Psoas muscle (tissue), 8 donors: ENCODE measurements at regions of chr9 and their contacts with region 1.

Region 1: DNA sequence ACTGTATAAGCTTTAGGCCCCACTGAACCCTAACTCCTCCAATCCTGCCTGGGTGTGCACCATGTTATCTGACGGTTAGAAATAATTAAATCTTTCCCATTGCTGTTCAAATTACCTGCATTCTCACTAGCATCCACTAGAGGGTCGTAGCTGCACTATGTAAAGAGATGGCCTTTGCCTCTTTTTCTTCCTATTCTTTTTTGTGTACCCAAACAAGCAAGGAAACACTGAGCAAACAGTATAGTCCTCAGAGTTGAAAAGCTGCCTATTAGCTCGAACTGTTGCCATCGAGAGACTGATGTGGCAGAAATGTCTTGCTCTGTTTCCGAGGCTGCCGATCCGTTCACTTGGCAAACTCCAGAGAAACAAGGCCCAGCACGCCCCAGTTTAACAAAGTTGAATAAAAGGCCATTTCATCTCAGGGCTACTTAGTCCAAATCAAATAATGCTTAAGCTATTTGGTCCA is 163.8 kb upstream of the TRPM3 start:
- DNase-seq: no peak
- ATAC-seq: peak; percentile 42 to 83 (median 58)
- H3K4me3 ChIP-seq: no peak overlapping the region
- H3K27ac ChIP-seq: no peak overlapping the region
- H3K4me1 ChIP-seq: no peaks in the 10 kb centered on the region
- H3K27me3 ChIP-seq: no peaks in the 10 kb centered on the region
- CTCF ChIP-seq: peak; percentile 86

Region 2: DNA sequence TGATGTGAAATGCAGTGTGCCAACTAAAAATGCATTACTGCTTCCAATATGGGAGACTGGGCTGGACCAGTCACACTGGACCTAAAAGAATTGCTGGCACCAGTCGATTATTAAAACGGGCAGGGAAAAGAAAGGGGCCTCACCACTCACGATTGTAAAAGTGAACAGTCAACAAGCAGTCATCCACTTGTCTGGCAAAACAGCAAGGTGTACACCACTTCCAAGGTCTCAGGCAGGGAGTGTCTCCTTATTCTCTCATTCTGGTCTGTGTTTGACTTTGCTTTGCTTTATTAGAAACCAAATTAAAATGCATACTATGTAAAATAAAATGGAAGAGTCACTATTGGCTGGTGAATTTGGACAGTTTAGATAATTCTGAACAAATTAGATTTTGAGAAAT is 106.0 kb before region 1 on chr9:
- intact Hi-C with region 1: no loop called
- DNase-seq: no peak
- ATAC-seq: no peak
- H3K4me3 ChIP-seq: no peak overlapping the region
- H3K27ac ChIP-seq: no peak overlapping the region
- H3K4me1 ChIP-seq: no peaks in the 10 kb centered on the region
- H3K27me3 ChIP-seq: no peaks in the 10 kb centered on the region
- CTCF ChIP-seq: no peak

Region 3: GRCh38 chr9:71768388-71769174 is 483.4 kb after region 1 on chr9 and contains the start of gene CEMIP2:
- intact Hi-C with region 1: loop called in 1 of 2 experiments (anchors 5 kb)
- DNase-seq: peak; percentile 89 to 95
- ATAC-seq: peak; percentile 87 to 89 (median 88)
- H3K4me3 ChIP-seq: peak within 1 kb of the TSS; percentile 83
- H3K27ac ChIP-seq: peak within 1 kb of the TSS; percentile 94
- H3K4me1 ChIP-seq: peaks cover 22% of the 10 kb centered on the region
- H3K27me3 ChIP-seq: no peaks in the 10 kb centered on the region
- CTCF ChIP-seq: no peak
- total RNA-seq, gene CEMIP2: 9.6 to 20.3 (median 16.2) TPM

Region 4: GRCh38 chr9:71806901-71807307 is 521.7 kb after region 1 on chr9:
- intact Hi-C with region 1: loop called (anchors 10 kb)
- DNase-seq: peak; percentile 44 to 68
- ATAC-seq: peak; percentile 92 to 99 (median 98)
- H3K4me3 ChIP-seq: no peak overlapping the region
- H3K27ac ChIP-seq: peak overlapping the region; percentile 11
- H3K4me1 ChIP-seq: peaks cover 7% of the 10 kb centered on the region
- H3K27me3 ChIP-seq: no peaks in the 10 kb centered on the region
- CTCF ChIP-seq: peak; percentile 94

Region 5: GRCh38 chr9:71819115-71819739 is 534.0 kb after region 1 on chr9:
- intact Hi-C with region 1: loop called in 1 of 2 experiments (anchors 10 kb)
- DNase-seq: peak in 1 of 2 donors; percentile 21
- ATAC-seq: no peak
- H3K4me3 ChIP-seq: no peak overlapping the region
- H3K27ac ChIP-seq: no peak overlapping the region
- H3K4me1 ChIP-seq: peaks cover 2% of the 10 kb centered on the region
- H3K27me3 ChIP-seq: no peaks in the 10 kb centered on the region
- CTCF ChIP-seq: peak; percentile 77